Activated B cell treated with CpG ODN at 0.5 μM for 24 hours (primary cell): ENCODE measurements at regions of chr20 and their contacts with region 1.

Region 1: GRCh38 chr20:2651772-2652723 is at the start of gene NOP56:
- DNase-seq: peak; percentile 97
- ATAC-seq: peak; percentile 90
- H3K4me3 Mint-ChIP-seq: peak within 1 kb of the TSS; percentile 90
- H3K27ac Mint-ChIP-seq: peak within 1 kb of the TSS; percentile 93
- H3K4me1 Mint-ChIP-seq: peaks cover 19% of the 10 kb centered on the region
- H3K27me3 Mint-ChIP-seq: no peaks in the 10 kb centered on the region
- CTCF ChIP-seq: no peak
- total RNA-seq, gene NOP56: 327 and 333 TPM in 2 replicates

Region 2: DNA sequence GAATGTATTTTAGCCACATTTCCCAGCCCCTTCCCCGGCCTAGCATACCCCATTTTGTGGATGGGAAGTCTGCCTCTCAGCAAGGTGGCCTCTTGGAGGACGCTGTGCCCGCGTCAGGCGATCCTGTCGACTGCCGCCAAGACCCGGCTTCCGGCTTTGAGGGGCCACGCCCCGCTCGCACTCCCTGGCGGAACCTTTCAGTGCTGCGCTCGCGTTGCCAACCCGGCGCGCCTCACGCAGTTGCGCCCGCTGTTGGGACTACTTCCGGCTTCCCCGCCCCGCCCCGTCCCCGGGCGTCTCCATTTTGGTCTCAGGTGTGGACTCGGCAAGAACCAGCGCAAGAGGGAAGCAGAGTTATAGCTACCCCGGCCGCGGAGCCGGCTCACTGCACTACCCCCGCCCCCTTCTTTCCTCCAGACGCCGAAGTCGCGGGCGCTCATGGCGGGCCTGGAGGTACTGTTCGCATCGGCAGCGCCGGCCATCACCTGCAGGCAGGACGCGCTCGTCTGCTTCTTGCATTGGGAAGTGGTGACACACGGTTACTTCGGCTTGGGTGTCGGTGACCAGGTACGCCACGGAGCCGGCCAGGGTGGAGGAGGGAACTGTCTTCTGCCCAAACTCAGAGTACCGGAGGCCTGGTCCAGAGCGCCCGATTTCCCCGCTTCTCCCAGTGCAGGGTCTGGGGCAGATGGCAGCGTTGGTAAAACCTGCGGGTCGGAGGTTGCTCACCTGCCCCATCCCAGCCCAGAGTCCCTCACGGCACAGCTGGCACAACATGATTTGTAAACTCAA is 1533.5 kb before region 1 on chr20 and contains the start of gene PSMF1:
- CTCF ChIA-PET with region 1: no interaction called
- POLR2A ChIA-PET with region 1: no interaction called
- intact Hi-C with region 1: loop called (anchors 5 kb)
- DNase-seq: peak; percentile 98
- ATAC-seq: peak; percentile 94
- H3K4me3 Mint-ChIP-seq: peak within 1 kb of the TSS; percentile 93
- H3K27ac Mint-ChIP-seq: peak within 1 kb of the TSS; percentile 85
- H3K4me1 Mint-ChIP-seq: peaks cover 64% of the 10 kb centered on the region
- H3K27me3 Mint-ChIP-seq: no peaks in the 10 kb centered on the region
- CTCF ChIP-seq: no peak
- total RNA-seq, gene PSMF1: 130 and 137 TPM in 2 replicates

Region 3: GRCh38 chr20:2470423-2471193 is 181.4 kb before region 1 on chr20 and contains the start of gene SNRPB:
- CTCF ChIA-PET with region 1: no interaction called
- POLR2A ChIA-PET with region 1: interaction called, 28 read pairs
- intact Hi-C with region 1: loop called (anchors 2 kb)
- DNase-seq: peak; percentile 95
- ATAC-seq: peak; percentile 94
- H3K4me3 Mint-ChIP-seq: peak within 1 kb of the TSS; percentile 99
- H3K27ac Mint-ChIP-seq: peak within 1 kb of the TSS; percentile 97
- H3K4me1 Mint-ChIP-seq: peaks cover 50% of the 10 kb centered on the region
- H3K27me3 Mint-ChIP-seq: no peaks in the 10 kb centered on the region
- CTCF ChIP-seq: no peak
- total RNA-seq, gene SNRPB: 215 and 234 TPM in 2 replicates

Region 4: GRCh38 chr20:2663887-2664719 is 12.1 kb after region 1 on chr20 and contains the start of gene IDH3B:
- CTCF ChIA-PET with region 1: interaction called, 4 read pairs
- POLR2A ChIA-PET with region 1: interaction called, 162 read pairs
- intact Hi-C with region 1: loop called (anchors 1 kb)
- DNase-seq: peak; percentile 84
- ATAC-seq: peak; percentile 95
- H3K4me3 Mint-ChIP-seq: peak within 1 kb of the TSS; percentile 93
- H3K27ac Mint-ChIP-seq: peak within 1 kb of the TSS; percentile 98
- H3K4me1 Mint-ChIP-seq: peaks cover 19% of the 10 kb centered on the region
- H3K27me3 Mint-ChIP-seq: peaks cover 6% of the 10 kb centered on the region
- CTCF ChIP-seq: no peak
- total RNA-seq, gene IDH3B: 121 and 127 TPM in 2 replicates

Region 5: GRCh38 chr20:2840138-2840966 is 188.3 kb after region 1 on chr20 and contains the starts of genes PCED1A and VPS16:
- CTCF ChIA-PET with region 1: no interaction called
- POLR2A ChIA-PET with region 1: interaction called, 12 read pairs
- intact Hi-C with region 1: loop called (anchors 2 kb)
- DNase-seq: peak; percentile 96
- ATAC-seq: peak; percentile 92
- H3K4me3 Mint-ChIP-seq: peak within 1 kb of the TSS; percentile 86
- H3K27ac Mint-ChIP-seq: peak within 1 kb of the TSS; percentile 82
- H3K4me1 Mint-ChIP-seq: peaks cover 28% of the 10 kb centered on the region
- H3K27me3 Mint-ChIP-seq: no peaks in the 10 kb centered on the region
- CTCF ChIP-seq: no peak
- total RNA-seq, gene PCED1A: 53.2 and 59.1 TPM in 2 replicates
- total RNA-seq, gene VPS16: 54.7 and 56.9 TPM in 2 replicates

Region 6: DNA sequence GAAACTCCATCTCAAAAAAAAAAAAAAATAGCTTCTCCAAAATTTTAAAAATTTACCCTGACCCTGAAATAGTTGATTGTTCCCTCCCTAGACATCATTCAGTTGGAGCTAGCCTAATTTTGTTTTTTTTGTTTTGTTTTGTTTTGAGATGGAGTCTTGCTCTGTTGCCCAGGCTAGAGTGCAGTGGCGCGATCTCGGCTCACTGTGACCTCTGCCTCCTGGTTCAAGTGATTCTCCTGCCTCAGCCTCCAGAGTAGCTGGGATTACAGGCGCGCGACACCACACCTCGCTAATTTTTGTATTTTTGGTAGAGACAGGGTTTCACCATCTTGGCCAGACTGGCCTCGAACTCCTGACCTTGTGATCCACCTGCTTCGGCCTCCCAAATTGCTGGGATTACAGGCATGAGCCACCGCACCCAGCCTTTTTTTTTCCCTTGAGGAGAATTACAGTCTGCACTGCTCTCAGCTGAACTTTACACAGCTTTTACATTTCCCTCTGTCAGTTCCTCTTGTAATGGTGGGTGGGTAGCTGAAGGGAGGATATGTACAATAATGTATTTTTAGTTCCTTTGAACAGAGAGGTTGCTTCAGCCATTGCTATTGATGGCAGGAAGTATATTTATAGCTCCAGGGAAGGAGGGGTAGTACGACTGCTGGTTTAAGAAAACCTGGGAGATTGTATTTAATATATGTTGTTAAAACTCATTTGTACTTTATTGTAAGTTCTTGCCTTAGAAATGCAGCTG is 249.0 kb after region 1 on chr20:
- CTCF ChIA-PET with region 1: no interaction called
- POLR2A ChIA-PET with region 1: no interaction called
- intact Hi-C with region 1: no loop called
- DNase-seq: no peak
- ATAC-seq: no peak
- H3K4me3 Mint-ChIP-seq: peak overlapping the region; percentile 47
- H3K27ac Mint-ChIP-seq: peak overlapping the region; percentile 77
- H3K4me1 Mint-ChIP-seq: peaks cover 39% of the 10 kb centered on the region
- H3K27me3 Mint-ChIP-seq: no peaks in the 10 kb centered on the region
- CTCF ChIP-seq: no peak

Region 7: GRCh38 chr20:3045816-3046676 is 394.0 kb after region 1 on chr20 and contains the start of gene MRPS26:
- CTCF ChIA-PET with region 1: no interaction called
- POLR2A ChIA-PET with region 1: no interaction called
- intact Hi-C with region 1: loop called (anchors 5 kb)
- DNase-seq: peak; percentile 88
- ATAC-seq: peak; percentile 91
- H3K4me3 Mint-ChIP-seq: peak within 1 kb of the TSS; percentile 84
- H3K27ac Mint-ChIP-seq: peak within 1 kb of the TSS; percentile 89
- H3K4me1 Mint-ChIP-seq: peaks cover 14% of the 10 kb centered on the region
- H3K27me3 Mint-ChIP-seq: no peaks in the 10 kb centered on the region
- CTCF ChIP-seq: no peak
- total RNA-seq, gene MRPS26: 30.6 and 34.7 TPM in 2 replicates